H1 (cell line): ENCODE measurements at regions of chr12 and their contacts with region 1.

Region 1: DNA sequence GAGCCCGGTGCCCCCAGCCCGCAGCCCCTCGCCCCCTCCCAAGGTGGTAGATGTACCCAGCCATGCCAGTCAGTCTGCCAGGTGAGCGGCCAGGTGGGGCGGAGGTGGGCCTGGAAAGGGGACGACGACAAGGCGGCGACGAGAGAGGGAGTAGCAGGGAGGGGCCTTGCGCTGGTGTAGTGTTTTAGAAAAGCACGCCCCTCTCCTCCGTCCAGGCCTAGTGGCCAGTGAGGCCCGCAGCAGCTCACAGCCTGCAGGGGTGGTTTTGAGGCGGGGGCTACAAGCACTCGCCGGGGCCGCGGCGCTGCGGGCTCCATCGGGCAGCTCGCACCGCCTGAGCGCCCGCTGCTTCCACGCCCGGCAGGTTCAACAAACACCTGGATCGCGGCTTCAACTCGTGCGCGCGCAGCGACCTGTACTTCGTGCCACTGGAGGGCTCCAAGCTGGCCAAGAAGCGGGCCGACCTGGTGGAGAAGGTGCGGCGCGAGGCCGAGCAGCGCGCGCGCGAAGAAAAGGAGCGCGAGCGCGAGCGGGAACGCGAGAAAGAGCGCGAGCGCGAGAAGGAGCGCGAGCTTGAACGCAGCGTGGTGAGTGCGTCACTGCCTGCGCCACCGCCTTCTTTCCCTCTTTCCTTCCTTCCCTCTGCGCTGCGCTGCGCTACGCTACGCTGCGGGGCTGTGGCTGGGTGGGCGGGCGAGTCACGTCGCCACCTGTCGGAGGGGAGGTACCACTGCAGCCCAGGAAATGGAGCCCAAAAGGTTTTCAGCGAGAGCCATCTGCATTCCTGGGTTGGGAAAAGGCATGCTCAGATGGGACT is 5.9 kb upstream of the RNU7-1 start:
- DNase-seq: peak in 1 of 2 experiments; percentile 93
- H3K4me3 ChIP-seq: peak overlapping the region; percentile 42 to 69 (median 58)
- H3K27ac ChIP-seq: peak overlapping the region; percentile 90
- H3K4me1 ChIP-seq: peaks cover 0 to 13% (median 5%) of the 10 kb centered on the region in 4 experiments; a peak in 5 of 7 replicates
- H3K27me3 ChIP-seq: no peaks in the 10 kb centered on the region
- CTCF ChIP-seq: peak in 2 of 3 experiments; percentile 90 to 99; a peak in 3 of 4 replicates
- EP300 ChIP-seq: peak; percentile 56 to 63; a peak in 1 of 3 replicates
- POLR2A ChIP-seq: peak in 1 of 2 experiments; percentile 93; a peak in 2 of 3 replicates
- RAD21 ChIP-seq: peak; percentile 51 to 53; a peak in 3 of 4 replicates

Region 2: DNA sequence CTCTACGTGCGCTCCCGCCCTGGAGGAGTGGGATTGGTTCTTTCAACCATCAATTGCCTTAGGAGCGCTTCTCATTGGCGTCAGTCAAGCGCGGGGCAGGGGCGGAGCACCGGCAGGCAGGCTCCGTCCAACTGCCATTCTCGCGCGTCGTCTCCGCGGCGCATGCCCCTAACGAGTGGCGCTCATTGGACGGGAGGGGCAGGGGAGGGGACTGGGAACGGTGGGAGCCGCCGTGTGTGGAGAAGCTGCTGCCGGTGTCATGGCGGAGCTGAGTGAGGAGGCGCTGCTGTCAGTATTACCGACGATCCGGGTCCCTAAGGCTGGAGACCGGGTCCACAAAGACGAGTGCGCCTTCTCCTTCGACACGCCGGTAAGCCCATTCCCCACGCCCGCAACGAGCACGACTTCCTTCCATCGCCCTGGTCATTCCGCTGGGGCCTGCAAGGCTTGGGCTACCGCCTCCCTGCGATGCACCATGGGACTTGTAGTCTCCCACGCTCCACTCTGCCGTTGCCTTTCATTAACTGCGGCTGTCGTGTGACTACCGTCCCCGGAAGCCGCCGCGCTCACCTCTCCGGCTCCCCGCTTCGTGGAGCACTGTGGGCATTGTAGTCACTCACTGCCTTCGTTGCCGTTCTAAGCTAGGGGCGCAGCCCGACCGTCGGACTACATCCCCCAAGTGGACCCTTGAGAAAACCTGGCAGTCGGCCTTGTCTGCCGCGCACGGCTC is 85.6 kb before region 1 on chr12 and contains the start of gene USP5:
- CTCF ChIA-PET with region 1: no interaction called
- POLR2A ChIA-PET with region 1: interaction called, 29 read pairs
- DNase-seq: peak; percentile 94 to 99
- H3K4me3 ChIP-seq: peak within 1 kb of the TSS; percentile 79 to 94 (median 88)
- H3K27ac ChIP-seq: peak within 1 kb of the TSS; percentile 77; the same call in 1 of the 2 replicates
- H3K4me1 ChIP-seq: peaks cover 0 to 14% (median 3%) of the 10 kb centered on the region in 4 experiments; a peak in 5 of 7 replicates
- H3K27me3 ChIP-seq: no peaks in the 10 kb centered on the region
- CTCF ChIP-seq: no peak
- EP300 ChIP-seq: no peak
- POLR2A ChIP-seq: peak in 1 of 2 experiments; percentile 79; a peak in 2 of 3 replicates
- RAD21 ChIP-seq: no peak
- total RNA-seq, gene USP5: 148 and 159 TPM in 2 replicates

Region 3: DNA sequence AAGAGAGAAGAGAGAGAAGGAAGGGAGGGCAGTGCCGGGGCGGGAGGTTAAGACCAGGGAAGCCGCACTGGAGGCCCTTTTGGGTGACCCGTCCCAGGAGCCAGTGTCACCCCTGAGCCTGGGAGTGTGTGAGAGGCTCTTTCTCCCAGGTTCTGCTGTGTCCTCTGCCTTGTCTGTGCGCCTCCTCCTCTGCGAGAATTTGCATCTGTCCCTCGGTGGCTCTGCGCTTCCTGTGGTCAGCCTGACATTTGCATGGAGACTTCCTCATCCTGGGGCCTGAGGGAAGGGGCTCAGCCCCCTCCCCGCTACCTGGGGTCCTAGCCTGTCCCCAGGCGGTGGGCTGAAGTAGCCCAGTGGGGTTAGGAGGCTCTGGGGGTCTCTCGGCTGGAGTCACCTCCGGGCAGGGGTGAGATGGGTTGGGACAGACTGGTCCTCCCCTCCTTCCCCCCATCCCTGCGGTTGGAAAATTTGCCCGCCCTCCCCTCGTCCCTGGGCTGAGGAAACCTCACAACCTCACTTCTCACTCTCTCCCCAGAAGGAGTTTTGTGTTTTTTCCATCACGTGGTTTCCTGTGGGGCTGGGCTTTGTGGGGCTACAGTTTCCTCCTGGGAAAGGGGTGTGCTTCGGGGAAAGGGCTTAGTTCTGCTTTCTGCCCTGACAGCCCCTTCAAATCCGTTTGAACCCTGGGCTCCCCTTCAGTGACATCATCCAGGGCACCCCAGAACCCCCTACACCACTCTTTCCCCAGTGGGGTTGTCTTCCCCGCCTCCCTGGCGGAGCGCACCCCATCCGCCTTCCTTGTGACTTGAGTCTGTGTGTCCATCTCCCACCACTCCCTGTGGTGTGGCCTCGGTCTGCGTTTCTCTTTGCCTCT is 16.0 kb after region 1 on chr12:
- CTCF ChIA-PET with region 1: interaction called, 277 read pairs
- POLR2A ChIA-PET with region 1: interaction called, 1,596 read pairs
- DNase-seq: no peak
- H3K4me3 ChIP-seq: no peak overlapping the region
- H3K27ac ChIP-seq: no peak overlapping the region
- H3K4me1 ChIP-seq: peaks cover 0 to 14% (median 6%) of the 10 kb centered on the region in 4 experiments; a peak in 4 of 7 replicates
- H3K27me3 ChIP-seq: no peaks in the 10 kb centered on the region
- CTCF ChIP-seq: no peak
- EP300 ChIP-seq: no peak
- POLR2A ChIP-seq: no peak
- RAD21 ChIP-seq: no peak